ENCODE measurements at regions of chr4 and their contacts with region 1.

Region 1: GRCh38 chr4:39134683-39135319 is 47.5 kb upstream of the WDR19 start:
- DNase-seq: no peak
- ATAC-seq: no peak
- H3K4me3 ChIP-seq: no peak overlapping the region
- H3K4me3 Mint-ChIP-seq: no peak overlapping the region
- H3K27ac ChIP-seq: no peak overlapping the region
- H3K27ac Mint-ChIP-seq: no peak overlapping the region
- H3K4me1 ChIP-seq: peaks cover 6% of the 10 kb centered on the region
- H3K4me1 Mint-ChIP-seq: peaks cover 0 to 6% of the 10 kb centered on the region in 2 donors
- H3K27me3 ChIP-seq: no peaks in the 10 kb centered on the region
- H3K27me3 Mint-ChIP-seq: no peaks in the 10 kb centered on the region
- CTCF ChIP-seq: no peak

Region 2: DNA sequence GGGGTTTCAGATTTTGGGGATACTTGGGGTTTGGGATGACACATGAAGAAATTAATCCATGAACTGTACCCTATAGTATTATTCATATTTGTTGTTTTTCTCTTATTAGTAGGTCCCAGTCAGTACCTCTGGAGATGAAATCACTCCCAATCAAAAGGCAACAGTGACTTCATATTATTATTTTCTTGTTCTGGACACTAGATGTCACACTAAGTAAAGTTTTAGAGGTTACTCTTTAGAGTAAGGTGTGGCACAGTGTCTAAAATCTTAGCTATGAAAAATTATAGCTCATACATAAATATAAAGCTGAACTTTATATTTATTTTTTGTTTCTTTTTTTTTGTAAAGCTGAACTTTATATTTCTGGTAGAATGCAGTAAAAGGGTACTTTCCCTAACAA is 232.1 kb before region 1 on chr4:
- intact Hi-C with region 1: loop called (anchors 1 kb)
- DNase-seq: peak in 1 of 2 donors; percentile 69
- ATAC-seq: peak; percentile 70 to 77 (median 72)
- H3K4me3 ChIP-seq: no peak overlapping the region
- H3K4me3 Mint-ChIP-seq: no peak overlapping the region
- H3K27ac ChIP-seq: no peak overlapping the region
- H3K27ac Mint-ChIP-seq: no peak overlapping the region
- H3K4me1 ChIP-seq: no peaks in the 10 kb centered on the region
- H3K4me1 Mint-ChIP-seq: no peaks in the 10 kb centered on the region
- H3K27me3 ChIP-seq: no peaks in the 10 kb centered on the region
- H3K27me3 Mint-ChIP-seq: peaks cover 5 to 7% of the 10 kb centered on the region in 2 donors
- CTCF ChIP-seq: peak; percentile 65

Region 3: DNA sequence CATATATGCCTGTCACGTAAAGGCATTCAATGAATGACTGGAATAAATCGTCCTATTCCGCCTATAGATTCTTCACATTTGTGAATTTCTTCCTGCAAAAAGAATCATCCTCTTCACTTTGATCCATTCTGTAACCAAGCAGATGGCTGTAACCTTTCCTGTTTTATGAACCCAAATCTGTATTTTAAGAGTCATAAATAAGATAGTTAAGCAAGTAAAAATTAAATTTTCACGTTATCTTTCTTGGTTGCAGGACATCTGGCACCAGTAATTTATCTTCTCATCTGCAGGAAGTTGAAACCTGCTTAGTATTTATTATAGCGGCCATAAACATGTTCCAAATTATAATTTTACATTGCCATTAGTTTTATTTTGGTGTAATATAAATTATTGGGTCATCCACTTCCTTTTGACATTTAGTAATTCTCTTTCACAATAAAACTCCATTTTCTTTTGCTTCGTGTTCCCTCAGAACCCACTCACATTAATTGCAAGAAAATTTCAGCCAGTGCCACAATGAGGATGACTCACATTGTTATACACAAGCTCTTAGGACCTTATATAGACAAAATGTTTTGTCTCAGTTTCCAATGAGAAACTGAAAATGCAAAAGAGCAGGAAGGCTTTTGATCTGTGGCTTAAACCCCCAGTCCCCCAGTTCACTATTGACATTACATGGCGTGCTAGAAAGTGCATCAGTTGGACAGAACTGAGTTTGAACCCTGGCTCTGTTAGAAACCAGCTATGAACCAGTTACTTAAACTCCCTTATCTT is 153.7 kb before region 1 on chr4:
- intact Hi-C with region 1: loop called (anchors 10 kb)
- DNase-seq: no peak
- ATAC-seq: no peak
- H3K4me3 ChIP-seq: no peak overlapping the region
- H3K4me3 Mint-ChIP-seq: no peak overlapping the region
- H3K27ac ChIP-seq: no peak overlapping the region
- H3K27ac Mint-ChIP-seq: peak overlapping the region in 1 of 2 donors; percentile 33
- H3K4me1 ChIP-seq: no peaks in the 10 kb centered on the region
- H3K4me1 Mint-ChIP-seq: no peaks in the 10 kb centered on the region
- H3K27me3 ChIP-seq: no peaks in the 10 kb centered on the region
- H3K27me3 Mint-ChIP-seq: no peaks in the 10 kb centered on the region
- CTCF ChIP-seq: no peak